Panc1 (cell line): ENCODE measurements at regions of chr1 and their contacts with region 1.

Region 1: GRCh38 chr1:176374967-176375569 is 87.9 kb upstream of the PAPPA2 start:
- DNase-seq: peak; percentile 64
- ATAC-seq: peak; percentile 89
- H3K4me3 ChIP-seq: no peak overlapping the region
- H3K27ac ChIP-seq: no peak overlapping the region
- H3K4me1 ChIP-seq: no peaks in the 10 kb centered on the region
- H3K27me3 ChIP-seq: no peaks in the 10 kb centered on the region
- CTCF ChIP-seq: peak; percentile 88

Region 2: GRCh38 chr1:176466514-176467220 is 91.6 kb after region 1 on chr1:
- CTCF ChIA-PET with region 1: no interaction called
- POLR2A ChIA-PET with region 1: no interaction called
- in situ Hi-C with region 1: no loop called
- intact Hi-C with region 1: loop called (anchors 2 kb)
- DNase-seq: peak; percentile 8
- ATAC-seq: peak; percentile 73; the same call in 1 of the 2 replicates
- H3K4me3 ChIP-seq: no peak overlapping the region
- H3K27ac ChIP-seq: no peak overlapping the region
- H3K4me1 ChIP-seq: no peaks in the 10 kb centered on the region
- H3K27me3 ChIP-seq: no peaks in the 10 kb centered on the region
- CTCF ChIP-seq: peak; percentile 58

Region 3: DNA sequence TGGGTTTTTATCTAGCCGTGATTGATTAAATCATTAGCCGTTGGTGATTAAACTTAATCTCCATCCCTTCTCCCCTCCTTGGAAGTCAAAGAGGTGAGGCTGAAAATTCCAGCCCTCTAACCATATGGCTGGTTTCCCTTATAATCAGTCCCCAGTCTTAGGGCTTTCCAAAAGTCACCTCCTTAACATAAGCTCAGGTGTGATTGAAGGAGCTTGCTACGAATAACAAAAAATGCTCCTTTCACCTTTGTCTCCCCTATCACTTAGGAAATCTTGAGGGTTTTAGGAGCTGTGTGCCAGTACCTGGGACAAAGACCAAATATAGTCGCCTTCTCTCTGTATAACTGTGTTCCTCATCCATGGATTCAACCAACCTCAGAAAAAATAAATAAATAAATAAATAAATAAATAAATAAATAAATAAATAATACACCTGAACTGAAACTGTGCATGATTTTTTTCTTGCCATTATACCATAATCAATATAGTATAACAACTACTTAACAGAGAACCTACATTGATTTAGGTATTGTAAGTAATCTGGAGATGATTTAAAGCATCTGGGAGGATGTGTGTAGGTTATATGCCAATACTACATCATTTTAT is 170.1 kb after region 1 on chr1:
- CTCF ChIA-PET with region 1: no interaction called
- POLR2A ChIA-PET with region 1: no interaction called
- in situ Hi-C with region 1: no loop called
- intact Hi-C with region 1: loop called (anchors 5 kb)
- DNase-seq: no peak
- ATAC-seq: no peak
- H3K4me3 ChIP-seq: no peak overlapping the region
- H3K27ac ChIP-seq: no peak overlapping the region
- H3K4me1 ChIP-seq: no peaks in the 10 kb centered on the region
- H3K27me3 ChIP-seq: no peaks in the 10 kb centered on the region; the same call in 1 of the 2 replicates
- CTCF ChIP-seq: no peak

Region 4: GRCh38 chr1:176691251-176692228 is 316.5 kb after region 1 on chr1:
- CTCF ChIA-PET with region 1: no interaction called
- POLR2A ChIA-PET with region 1: no interaction called
- in situ Hi-C with region 1: no loop called
- intact Hi-C with region 1: loop called (anchors 1 kb)
- DNase-seq: peak; percentile 35
- ATAC-seq: peak; percentile 72; the same call in 1 of the 2 replicates
- H3K4me3 ChIP-seq: no peak overlapping the region
- H3K27ac ChIP-seq: no peak overlapping the region
- H3K4me1 ChIP-seq: no peaks in the 10 kb centered on the region
- H3K27me3 ChIP-seq: 0 out of 2 replicates have a peak, but pooled peaks cover 2% of the 10 kb centered on the region
- CTCF ChIP-seq: peak; percentile 81

Region 5: GRCh38 chr1:176843352-176844297 is 468.6 kb after region 1 on chr1:
- CTCF ChIA-PET with region 1: no interaction called
- POLR2A ChIA-PET with region 1: no interaction called
- in situ Hi-C with region 1: no loop called
- intact Hi-C with region 1: loop called (anchors 1 kb)
- DNase-seq: peak; percentile 1
- ATAC-seq: no peak
- H3K4me3 ChIP-seq: no peak overlapping the region
- H3K27ac ChIP-seq: no peak overlapping the region
- H3K4me1 ChIP-seq: no peaks in the 10 kb centered on the region
- H3K27me3 ChIP-seq: 0 out of 2 replicates have a peak, but pooled peaks cover 6% of the 10 kb centered on the region
- CTCF ChIP-seq: peak; percentile 54

Region 6: GRCh38 chr1:176880954-176881595 is 506.0 kb after region 1 on chr1:
- CTCF ChIA-PET with region 1: no interaction called
- POLR2A ChIA-PET with region 1: no interaction called
- in situ Hi-C with region 1: no loop called
- intact Hi-C with region 1: loop called (anchors 2 kb)
- DNase-seq: peak; percentile 43
- ATAC-seq: peak; percentile 96
- H3K4me3 ChIP-seq: no peak overlapping the region
- H3K27ac ChIP-seq: no peak overlapping the region
- H3K4me1 ChIP-seq: no peaks in the 10 kb centered on the region
- H3K27me3 ChIP-seq: peaks cover 2% of the 10 kb centered on the region; the same call in 1 of the 2 replicates
- CTCF ChIP-seq: peak; percentile 84